Activated CD4-positive, alpha-beta memory T cell treated with anti-CD3 and anti-CD28 coated beads, Interleukin-2, amount 10 ng/mL, durations not matched to agents 7 days and 5 days (primary cell): ENCODE measurements at regions of chr1 and their contacts with region 1.

Region 1: GRCh38 chr1:51235673-51236530 is at the start of gene RNF11:
- DNase-seq: peak; percentile 93
- H3K4me3 Mint-ChIP-seq: peak within 1 kb of the TSS; percentile 97
- H3K27ac Mint-ChIP-seq: peak within 1 kb of the TSS; percentile 87
- H3K4me1 Mint-ChIP-seq: peaks cover 31% of the 10 kb centered on the region
- H3K27me3 Mint-ChIP-seq: no peaks in the 10 kb centered on the region
- total RNA-seq, gene RNF11: 34.8 to 39.7 TPM

Region 2: DNA sequence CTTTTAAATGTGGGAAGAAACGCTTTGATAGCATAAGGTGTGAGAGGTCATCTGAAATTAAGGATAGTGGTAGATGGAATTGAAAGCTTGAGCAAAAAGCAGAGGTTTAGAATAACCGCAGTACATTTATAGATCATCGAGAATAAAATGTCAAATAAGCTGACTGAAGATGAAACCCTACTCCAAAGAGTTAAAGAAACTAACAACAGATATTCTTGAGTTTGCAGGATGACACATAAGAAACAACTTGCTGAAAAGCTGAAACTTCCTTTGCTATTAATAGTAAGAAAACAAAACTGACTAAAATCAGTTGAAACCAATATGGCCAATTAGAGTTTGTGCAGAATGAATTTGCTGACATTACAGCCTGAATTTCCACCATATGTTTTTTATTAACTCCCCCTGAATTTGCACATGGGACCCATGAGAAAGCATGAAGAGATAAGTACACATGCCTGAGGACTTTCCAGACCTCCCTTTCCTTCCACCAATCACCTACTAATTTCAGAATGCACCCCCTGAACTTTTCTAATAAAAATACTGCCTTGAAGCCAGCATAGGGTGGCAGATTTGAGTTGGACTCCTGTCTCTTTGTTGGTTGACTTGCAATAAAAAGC is 135.5 kb before region 1 on chr1:
- CTCF ChIA-PET with region 1: no interaction called
- POLR2A ChIA-PET with region 1: no interaction called
- DNase-seq: no peak
- H3K4me3 Mint-ChIP-seq: no peak overlapping the region
- H3K27ac Mint-ChIP-seq: no peak overlapping the region
- H3K4me1 Mint-ChIP-seq: peaks cover 3% of the 10 kb centered on the region
- H3K27me3 Mint-ChIP-seq: peaks cover 20% of the 10 kb centered on the region

Region 3: DNA sequence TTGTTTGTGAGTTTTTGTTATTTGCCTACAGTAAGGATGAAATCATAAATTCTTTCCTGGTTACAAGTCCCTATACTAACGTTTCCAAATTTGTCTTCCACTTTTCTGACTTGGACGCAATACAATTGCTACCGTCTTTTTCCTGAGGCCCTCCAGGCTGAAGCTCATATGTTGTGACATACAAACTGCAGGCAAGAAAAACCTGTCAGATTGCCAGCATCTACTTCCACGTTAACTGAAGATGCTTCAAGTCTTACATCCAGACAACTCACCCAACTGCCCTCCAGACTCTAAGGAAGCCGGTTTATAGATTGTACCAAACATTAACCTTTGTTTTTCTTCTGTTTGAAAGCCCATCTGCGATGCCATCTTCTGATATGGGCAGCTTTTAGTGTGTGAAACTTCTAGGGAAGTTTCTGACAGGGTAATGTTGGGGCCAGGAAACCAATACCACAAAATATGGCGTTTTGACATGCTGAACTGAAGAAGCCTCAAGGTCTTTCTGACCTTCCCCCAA is 21.2 kb before region 1 on chr1:
- CTCF ChIA-PET with region 1: interaction called, 3 read pairs
- POLR2A ChIA-PET with region 1: interaction called, 14 read pairs
- DNase-seq: peak; percentile 18
- H3K4me3 Mint-ChIP-seq: no peak overlapping the region
- H3K27ac Mint-ChIP-seq: peak overlapping the region; percentile 54
- H3K4me1 Mint-ChIP-seq: peaks cover 23% of the 10 kb centered on the region
- H3K27me3 Mint-ChIP-seq: no peaks in the 10 kb centered on the region

Region 4: GRCh38 chr1:51519865-51520699 is 284.2 kb after region 1 on chr1:
- CTCF ChIA-PET with region 1: no interaction called
- POLR2A ChIA-PET with region 1: no interaction called
- DNase-seq: no peak
- H3K4me3 Mint-ChIP-seq: peak overlapping the region; percentile 69
- H3K27ac Mint-ChIP-seq: peak overlapping the region; percentile 62
- H3K4me1 Mint-ChIP-seq: peaks cover 46% of the 10 kb centered on the region
- H3K27me3 Mint-ChIP-seq: no peaks in the 10 kb centered on the region

Region 5: GRCh38 chr1:51564124-51564523 is 328.2 kb after region 1 on chr1:
- CTCF ChIA-PET with region 1: no interaction called
- POLR2A ChIA-PET with region 1: no interaction called
- DNase-seq: no peak
- H3K4me3 Mint-ChIP-seq: no peak overlapping the region
- H3K27ac Mint-ChIP-seq: peak overlapping the region; percentile 15
- H3K4me1 Mint-ChIP-seq: peaks cover 18% of the 10 kb centered on the region
- H3K27me3 Mint-ChIP-seq: no peaks in the 10 kb centered on the region